ENCODE measurements at regions of chr1 and their contacts with region 1.

Region 1: GRCh38 chr1:111399792-111400610 is 27.5 kb downstream of the OVGP1 start:
- DNase-seq: no peak
- H3K4me3 ChIP-seq: no peak overlapping the region
- H3K27me3 ChIP-seq: 0 out of 2 replicates have a peak, but pooled peaks cover 2% of the 10 kb centered on the region
- CTCF ChIP-seq: peak; percentile 68

Region 2: DNA sequence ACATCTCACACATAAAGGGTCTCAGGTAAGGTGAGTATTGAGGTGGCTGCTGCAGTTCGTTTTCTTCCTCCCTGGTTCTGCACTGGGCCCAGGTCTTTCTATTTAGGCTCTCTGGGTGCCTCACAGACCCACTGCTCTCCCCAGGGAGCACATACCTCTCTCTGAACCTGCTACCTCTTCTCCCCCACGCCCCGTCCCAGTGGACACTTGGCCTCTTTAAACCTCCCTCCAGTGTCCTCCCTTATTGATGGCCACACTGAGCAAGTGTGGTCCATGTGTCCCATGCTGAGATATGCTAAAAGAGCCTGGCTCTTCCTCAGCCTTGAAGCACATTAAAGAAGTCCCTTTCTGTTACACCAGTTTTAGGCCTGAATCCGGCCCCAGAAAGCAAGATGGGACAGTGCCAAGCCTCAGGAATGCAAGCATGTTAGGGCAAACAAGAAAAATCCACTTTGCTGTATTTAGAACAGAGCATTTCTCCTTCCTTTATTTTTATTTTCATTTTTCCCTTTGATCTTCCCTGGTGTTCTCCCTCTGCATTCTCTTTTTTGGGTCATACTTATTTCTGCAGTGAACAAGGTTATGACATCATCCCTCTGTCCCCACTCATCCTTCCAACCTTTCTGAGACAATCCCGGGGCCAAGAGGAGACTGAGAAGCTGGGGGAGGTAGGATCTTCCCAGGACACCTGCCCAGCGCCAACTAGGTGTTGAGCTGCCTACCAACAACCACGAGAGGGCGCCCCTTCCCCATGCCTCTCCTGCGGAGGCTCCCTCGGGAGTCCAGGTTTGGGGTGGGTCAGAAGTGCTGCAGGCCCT is 177.5 kb before region 1 on chr1:
- CTCF ChIA-PET with region 1: interaction called, 31 read pairs
- POLR2A ChIA-PET with region 1: no interaction called
- DNase-seq: no peak
- H3K4me3 ChIP-seq: no peak overlapping the region
- H3K27me3 ChIP-seq: no peaks in the 10 kb centered on the region
- CTCF ChIP-seq: peak; percentile 87

Region 3: DNA sequence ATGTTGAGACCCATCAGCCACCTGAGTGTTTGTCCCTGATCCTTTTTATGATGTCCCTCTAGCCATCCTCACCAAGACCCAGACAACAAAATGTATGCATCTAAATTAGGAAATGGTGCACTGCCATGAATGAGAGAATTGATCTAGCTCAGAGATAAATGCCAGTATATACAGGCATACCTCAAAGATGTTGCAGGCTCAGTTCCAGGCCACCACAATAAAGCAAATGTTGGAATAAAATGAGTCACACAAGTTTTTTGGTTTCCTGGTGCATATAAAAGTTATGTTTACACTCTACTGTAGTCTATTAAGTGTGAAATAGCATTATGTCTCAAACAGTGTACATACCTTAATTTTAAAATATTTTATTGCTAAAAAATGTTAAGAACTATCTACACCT is 45.4 kb before region 1 on chr1:
- CTCF ChIA-PET with region 1: no interaction called
- POLR2A ChIA-PET with region 1: no interaction called
- DNase-seq: no peak
- H3K4me3 ChIP-seq: no peak overlapping the region
- H3K27me3 ChIP-seq: peaks cover 4% of the 10 kb centered on the region
- CTCF ChIP-seq: no peak

Region 4: GRCh38 chr1:111381457-111381856 is 18.5 kb before region 1 on chr1:
- CTCF ChIA-PET with region 1: interaction called, 11 read pairs
- POLR2A ChIA-PET with region 1: no interaction called
- DNase-seq: no peak
- H3K4me3 ChIP-seq: no peak overlapping the region
- H3K27me3 ChIP-seq: peaks cover 2% of the 10 kb centered on the region
- CTCF ChIP-seq: no peak

Region 5: GRCh38 chr1:111417755-111418154 is 17.8 kb after region 1 on chr1:
- CTCF ChIA-PET with region 1: interaction called, 17 read pairs
- POLR2A ChIA-PET with region 1: no interaction called
- DNase-seq: no peak
- H3K4me3 ChIP-seq: no peak overlapping the region
- H3K27me3 ChIP-seq: no peaks in the 10 kb centered on the region
- CTCF ChIP-seq: no peak